Calu3 (cell line): ENCODE measurements at regions of chr3 and their contacts with region 1.

Region 1: DNA sequence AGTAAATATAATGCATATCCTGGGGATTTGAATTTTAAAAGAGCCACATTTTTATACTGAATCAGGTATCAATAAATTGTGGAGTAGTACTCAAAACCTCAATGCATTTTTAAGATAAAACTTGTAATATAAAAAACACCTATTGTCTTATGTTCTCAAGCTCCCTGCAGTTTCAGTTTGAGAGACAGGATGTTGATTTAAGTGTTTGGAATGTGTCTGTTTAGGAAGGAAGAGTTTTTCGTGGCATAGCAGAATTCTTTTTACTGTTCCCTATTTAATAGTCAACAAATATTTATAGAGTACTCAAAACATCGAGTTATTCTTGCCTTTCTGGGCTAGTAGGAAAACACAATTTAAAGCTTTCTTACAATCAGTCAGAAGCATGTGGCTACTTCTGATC is 146.1 kb upstream of the BCHE start:
- DNase-seq: no peak
- H3K4me3 Mint-ChIP-seq: no peak overlapping the region
- H3K27ac Mint-ChIP-seq: no peak overlapping the region
- H3K4me1 Mint-ChIP-seq: peaks cover 13% of the 10 kb centered on the region
- H3K27me3 Mint-ChIP-seq: no peaks in the 10 kb centered on the region
- CTCF ChIP-seq: no peak

Region 2: GRCh38 chr3:164962610-164963009 is 1020.7 kb before region 1 on chr3:
- CTCF ChIA-PET with region 1: no interaction called
- intact Hi-C with region 1: no loop called
- DNase-seq: no peak
- H3K4me3 Mint-ChIP-seq: no peak overlapping the region
- H3K27ac Mint-ChIP-seq: no peak overlapping the region
- H3K4me1 Mint-ChIP-seq: no peaks in the 10 kb centered on the region
- H3K27me3 Mint-ChIP-seq: no peaks in the 10 kb centered on the region
- CTCF ChIP-seq: no peak

Region 3: DNA sequence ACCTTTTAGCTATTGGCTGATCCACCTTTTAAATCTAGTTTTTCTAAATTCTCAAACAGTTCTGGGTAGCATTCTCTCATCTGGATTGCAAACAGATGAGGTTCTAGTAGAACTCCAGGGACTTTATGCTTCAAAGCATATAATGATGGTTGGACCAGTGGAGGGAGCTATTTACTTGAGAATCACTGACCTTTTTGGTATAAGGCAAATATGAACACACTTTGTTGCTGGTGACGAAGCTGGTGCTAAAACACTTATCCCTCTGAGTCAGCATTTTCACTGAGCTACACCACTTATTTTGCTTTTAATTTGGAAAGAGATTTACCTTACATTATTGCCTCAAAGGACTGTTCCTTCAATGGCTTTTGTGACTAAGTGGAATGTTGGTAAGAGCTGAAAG is 728.5 kb before region 1 on chr3:
- CTCF ChIA-PET with region 1: no interaction called
- intact Hi-C with region 1: loop called (anchors 10 kb)
- DNase-seq: peak; percentile 42
- H3K4me3 Mint-ChIP-seq: no peak overlapping the region
- H3K27ac Mint-ChIP-seq: no peak overlapping the region
- H3K4me1 Mint-ChIP-seq: no peaks in the 10 kb centered on the region
- H3K27me3 Mint-ChIP-seq: no peaks in the 10 kb centered on the region
- CTCF ChIP-seq: peak; percentile 57

Region 4: DNA sequence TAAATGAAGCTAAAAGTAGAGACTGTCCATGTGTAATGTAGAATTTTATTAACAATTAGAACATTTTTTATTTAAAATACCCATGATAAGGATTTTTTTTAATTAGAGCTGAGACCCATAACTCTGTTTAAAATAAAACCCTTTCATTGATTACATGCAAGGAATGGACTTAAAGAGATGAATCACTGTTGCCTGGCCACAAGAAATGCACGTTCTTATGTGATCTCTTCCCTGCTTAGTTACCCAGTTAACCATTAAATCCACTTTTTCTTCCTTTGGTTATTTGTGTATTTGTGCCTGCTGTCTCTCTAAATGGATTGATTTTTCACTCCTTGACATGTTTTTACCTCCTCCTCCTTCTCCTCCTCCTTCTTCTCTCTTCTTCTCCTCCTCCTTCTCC is 703.8 kb before region 1 on chr3:
- CTCF ChIA-PET with region 1: interaction called, 11 read pairs
- intact Hi-C with region 1: no loop called
- DNase-seq: no peak
- H3K4me3 Mint-ChIP-seq: no peak overlapping the region
- H3K27ac Mint-ChIP-seq: no peak overlapping the region
- H3K4me1 Mint-ChIP-seq: no peaks in the 10 kb centered on the region
- H3K27me3 Mint-ChIP-seq: no peaks in the 10 kb centered on the region
- CTCF ChIP-seq: no peak

Region 5: DNA sequence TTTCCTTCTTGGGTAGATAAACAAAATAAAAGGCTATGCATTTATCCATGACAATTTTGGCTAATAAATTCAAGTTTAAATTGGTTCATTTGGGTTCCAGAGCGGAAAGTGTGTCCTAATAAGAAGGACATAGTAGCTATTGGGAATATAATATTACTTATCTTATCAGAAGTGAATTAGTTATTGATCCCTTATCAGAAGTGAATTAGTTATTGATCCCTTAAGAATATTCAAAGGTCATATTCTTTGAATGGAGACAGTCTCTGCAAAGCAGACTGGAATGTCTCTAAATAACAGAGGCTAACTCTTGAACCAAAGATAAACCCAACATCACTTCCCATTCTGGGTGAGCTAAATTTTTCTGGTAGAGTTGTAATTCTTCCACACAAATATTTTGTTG is 144.7 kb after region 1 on chr3:
- CTCF ChIA-PET with region 1: no interaction called
- intact Hi-C with region 1: no loop called
- DNase-seq: no peak
- H3K4me3 Mint-ChIP-seq: no peak overlapping the region
- H3K27ac Mint-ChIP-seq: no peak overlapping the region
- H3K4me1 Mint-ChIP-seq: peaks cover 3% of the 10 kb centered on the region
- H3K27me3 Mint-ChIP-seq: no peaks in the 10 kb centered on the region
- CTCF ChIP-seq: no peak